Caco-2 (cell line): ENCODE measurements at regions of chr2 and their contacts with region 1.

Region 1: GRCh38 chr2:173109253-173110188 is 33.9 kb downstream of the MAP3K20 start:
- DNase-seq: peak in 1 of 2 experiments; percentile 66
- H3K4me3 ChIP-seq: no peak overlapping the region
- H3K4me3 Mint-ChIP-seq: peak overlapping the region; percentile 46
- H3K27ac Mint-ChIP-seq: peak overlapping the region; percentile 96
- H3K4me1 ChIP-seq: peaks cover 39% of the 10 kb centered on the region
- H3K4me1 Mint-ChIP-seq: peaks cover 39% of the 10 kb centered on the region
- H3K27me3 ChIP-seq: no peaks in the 10 kb centered on the region
- H3K27me3 Mint-ChIP-seq: no peaks in the 10 kb centered on the region
- CTCF ChIP-seq: no peak

Region 2: GRCh38 chr2:173048897-173049661 is 60.4 kb before region 1 on chr2:
- CTCF ChIA-PET with region 1: no interaction called
- POLR2A ChIA-PET with region 1: no interaction called
- intact Hi-C with region 1: loop called (anchors 1 kb)
- DNase-seq: peak; percentile 72 to 85
- H3K4me3 ChIP-seq: no peak overlapping the region
- H3K4me3 Mint-ChIP-seq: peak overlapping the region; percentile 45
- H3K27ac Mint-ChIP-seq: peak overlapping the region; percentile 77
- H3K4me1 ChIP-seq: peaks cover 52% of the 10 kb centered on the region
- H3K4me1 Mint-ChIP-seq: peaks cover 43% of the 10 kb centered on the region
- H3K27me3 ChIP-seq: no peaks in the 10 kb centered on the region
- H3K27me3 Mint-ChIP-seq: no peaks in the 10 kb centered on the region
- CTCF ChIP-seq: no peak

Region 3: DNA sequence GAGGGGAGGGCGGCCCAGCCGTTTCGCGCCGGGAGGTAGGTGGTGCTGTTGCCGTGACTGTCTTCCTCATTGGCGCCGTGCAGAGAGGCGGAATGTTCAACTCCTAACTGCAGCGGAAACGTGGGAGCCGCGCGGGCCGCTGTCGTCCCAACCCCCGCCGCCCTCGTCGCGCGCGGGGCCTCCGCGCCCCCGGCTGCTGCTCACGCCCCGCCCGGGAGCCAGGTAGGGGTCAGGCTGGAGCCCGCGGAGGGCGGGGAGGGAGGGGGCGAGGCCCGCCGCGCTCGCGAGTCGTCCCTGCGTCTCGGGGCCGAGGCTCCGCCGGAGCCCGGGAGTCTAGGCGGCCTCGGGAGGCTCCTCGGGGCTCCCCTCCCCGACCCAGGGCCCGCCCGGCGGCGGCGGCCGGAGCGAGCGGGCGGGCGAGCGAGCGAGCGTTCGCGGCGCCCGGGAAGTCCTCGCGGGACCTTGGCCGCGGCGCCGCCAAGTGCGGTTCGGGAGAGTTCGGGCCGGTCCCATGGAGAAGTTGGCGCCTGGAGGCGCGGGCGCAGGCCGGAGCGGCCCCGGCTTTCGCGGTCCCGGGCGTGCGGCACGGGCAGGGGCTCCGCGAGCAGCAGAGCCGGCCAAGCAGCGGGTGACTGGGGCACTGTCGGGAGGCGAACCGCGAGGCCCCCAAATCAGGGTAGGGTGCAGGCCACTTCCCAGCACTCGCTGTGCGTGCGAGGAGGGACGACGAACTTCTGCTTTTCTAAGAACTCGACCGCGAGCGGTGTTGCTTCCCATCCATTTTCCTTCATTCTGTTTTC is 33.5 kb before region 1 on chr2 and contains the start of gene MAP3K20:
- CTCF ChIA-PET with region 1: no interaction called
- POLR2A ChIA-PET with region 1: no interaction called
- intact Hi-C with region 1: loop called (anchors 1 kb)
- DNase-seq: peak; percentile 68 to 79
- H3K4me3 ChIP-seq: peak within 1 kb of the TSS; percentile 93
- H3K4me3 Mint-ChIP-seq: peak within 1 kb of the TSS; percentile 72
- H3K27ac Mint-ChIP-seq: peak within 1 kb of the TSS; percentile 58
- H3K4me1 ChIP-seq: peaks cover 9% of the 10 kb centered on the region
- H3K4me1 Mint-ChIP-seq: peaks cover 18% of the 10 kb centered on the region
- H3K27me3 ChIP-seq: no peaks in the 10 kb centered on the region
- H3K27me3 Mint-ChIP-seq: no peaks in the 10 kb centered on the region
- CTCF ChIP-seq: peak; percentile 22 to 46
- total RNA-seq, gene MAP3K20: 41.5 and 44.5 TPM in 2 replicates

Region 4: DNA sequence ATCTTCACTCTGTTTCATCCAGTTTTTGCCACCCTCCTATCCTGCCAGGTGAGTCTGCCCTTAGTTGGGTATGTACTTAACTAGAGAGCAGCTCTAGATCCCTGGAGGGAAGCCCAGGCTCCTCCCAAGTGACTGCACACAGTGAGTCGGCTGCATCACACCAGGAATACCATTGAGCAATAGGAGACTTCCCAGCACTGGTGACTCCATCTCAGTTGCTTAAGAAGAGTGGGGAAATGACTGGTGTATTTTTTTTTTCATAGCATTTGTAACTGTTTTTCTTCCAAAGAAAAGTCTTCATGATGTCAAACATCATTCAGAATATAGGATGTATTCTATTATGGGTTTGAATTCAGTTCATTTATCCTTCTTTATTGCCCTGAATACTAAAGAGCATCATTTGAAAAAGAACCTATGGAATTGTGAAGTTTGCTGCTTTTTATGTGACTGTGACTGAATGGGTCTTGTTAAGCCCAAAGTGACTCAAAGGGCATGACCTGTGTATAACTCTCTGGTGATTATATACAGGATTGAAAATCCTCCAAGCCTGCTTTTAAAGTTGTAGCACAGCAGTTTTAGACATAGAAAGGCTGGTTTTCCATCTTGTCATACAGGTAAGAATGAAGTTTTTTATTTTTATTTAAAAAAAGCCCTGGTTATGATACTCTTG is 50.4 kb after region 1 on chr2:
- CTCF ChIA-PET with region 1: no interaction called
- POLR2A ChIA-PET with region 1: no interaction called
- intact Hi-C with region 1: loop called (anchors 1 kb)
- DNase-seq: peak; percentile 65 to 72
- H3K4me3 ChIP-seq: no peak overlapping the region
- H3K4me3 Mint-ChIP-seq: no peak overlapping the region
- H3K27ac Mint-ChIP-seq: peak overlapping the region; percentile 26
- H3K4me1 ChIP-seq: peaks cover 21% of the 10 kb centered on the region
- H3K4me1 Mint-ChIP-seq: peaks cover 20% of the 10 kb centered on the region
- H3K27me3 ChIP-seq: no peaks in the 10 kb centered on the region
- H3K27me3 Mint-ChIP-seq: no peaks in the 10 kb centered on the region
- CTCF ChIP-seq: no peak